Activated CD4-positive, alpha-beta memory T cell treated with anti-CD3 and anti-CD28 coated beads for 36 hours (primary cell): ENCODE measurements at regions of chr6 and their contacts with region 1.

Region 1: GRCh38 chr6:30814136-30815040 is 69.9 kb upstream of the DDR1 start:
- DNase-seq: peak; percentile 78
- H3K4me3 Mint-ChIP-seq: peak overlapping the region; percentile 22
- H3K27ac Mint-ChIP-seq: peak overlapping the region; percentile 91
- H3K4me1 Mint-ChIP-seq: peaks cover 94% of the 10 kb centered on the region
- H3K27me3 Mint-ChIP-seq: no peaks in the 10 kb centered on the region

Region 2: DNA sequence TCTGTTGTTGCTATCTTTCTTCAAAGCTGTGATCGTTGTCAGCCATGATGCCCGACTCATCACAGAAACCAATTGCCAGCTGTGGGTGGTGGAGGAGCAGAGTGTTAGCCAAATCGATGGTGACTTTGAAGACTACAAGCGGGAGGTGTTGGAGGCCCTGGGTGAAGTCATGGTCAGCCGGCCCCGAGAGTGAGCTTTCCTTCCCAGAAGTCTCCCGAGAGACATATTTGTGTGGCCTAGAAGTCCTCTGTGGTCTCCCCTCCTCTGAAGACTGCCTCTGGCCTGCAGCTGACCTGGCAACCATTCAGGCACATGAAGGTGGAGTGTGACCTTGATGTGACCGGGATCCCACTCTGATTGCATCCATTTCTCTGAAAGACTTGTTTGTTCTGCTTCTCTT is 223.9 kb before region 1 on chr6:
- CTCF ChIA-PET with region 1: no interaction called
- POLR2A ChIA-PET with region 1: no interaction called
- intact Hi-C with region 1: no loop called
- DNase-seq: no peak
- H3K4me3 Mint-ChIP-seq: no peak overlapping the region
- H3K27ac Mint-ChIP-seq: no peak overlapping the region
- H3K4me1 Mint-ChIP-seq: no peaks in the 10 kb centered on the region
- H3K27me3 Mint-ChIP-seq: no peaks in the 10 kb centered on the region

Region 3: GRCh38 chr6:30672445-30673253 is 141.7 kb before region 1 on chr6 and contains the start of gene DHX16:
- CTCF ChIA-PET with region 1: no interaction called
- POLR2A ChIA-PET with region 1: no interaction called
- intact Hi-C with region 1: no loop called
- DNase-seq: peak; percentile 93
- H3K4me3 Mint-ChIP-seq: peak within 1 kb of the TSS; percentile 91
- H3K27ac Mint-ChIP-seq: peak within 1 kb of the TSS; percentile 84
- H3K4me1 Mint-ChIP-seq: peaks cover 30% of the 10 kb centered on the region
- H3K27me3 Mint-ChIP-seq: no peaks in the 10 kb centered on the region
- total RNA-seq, gene DHX16: 33.1 to 35.3 TPM

Region 4: GRCh38 chr6:30761791-30762429 is 52.5 kb before region 1 on chr6:
- CTCF ChIA-PET with region 1: interaction called, 3 read pairs
- POLR2A ChIA-PET with region 1: interaction called, 4 read pairs
- intact Hi-C with region 1: loop called (anchors 1 kb)
- DNase-seq: no peak
- H3K4me3 Mint-ChIP-seq: no peak overlapping the region
- H3K27ac Mint-ChIP-seq: peak overlapping the region; percentile 50
- H3K4me1 Mint-ChIP-seq: peaks cover 48% of the 10 kb centered on the region
- H3K27me3 Mint-ChIP-seq: no peaks in the 10 kb centered on the region

Region 5: DNA sequence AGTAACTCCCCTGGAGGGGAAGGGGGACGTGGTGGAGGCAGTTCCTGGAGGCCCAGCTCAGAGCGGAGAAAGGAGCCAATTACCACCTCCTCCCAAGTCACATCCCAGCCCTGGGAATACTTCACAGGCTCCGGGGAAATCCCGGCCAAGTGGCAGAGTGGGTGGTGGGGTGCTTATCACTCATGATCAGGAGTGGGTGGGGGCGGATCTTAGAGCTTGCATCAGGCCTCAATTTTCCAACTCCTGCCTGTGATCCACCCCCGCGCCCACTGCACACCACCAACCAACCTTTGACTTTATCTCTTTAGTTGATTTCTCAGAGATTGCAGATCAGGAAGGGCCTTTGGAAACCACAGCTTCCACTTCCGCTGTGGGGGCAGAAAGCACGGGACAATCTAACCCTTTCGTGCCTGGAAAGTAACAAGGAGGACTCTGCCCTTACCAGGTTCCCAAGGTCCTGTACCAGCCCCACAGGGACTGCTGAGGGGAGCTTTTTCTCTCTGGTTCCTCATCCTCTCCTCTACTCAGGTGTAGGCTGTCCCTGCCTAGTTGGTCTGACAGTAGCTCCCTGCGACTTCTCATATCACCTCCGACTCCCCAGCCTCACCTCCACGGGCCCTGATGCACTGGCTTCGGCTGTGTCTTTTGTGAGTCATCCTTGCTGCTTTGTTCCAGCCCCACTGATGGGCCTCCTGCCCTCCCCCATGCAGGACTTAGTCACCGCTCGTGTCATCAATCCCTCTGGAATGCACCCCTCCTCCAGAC is 45.1 kb before region 1 on chr6:
- CTCF ChIA-PET with region 1: interaction called, 18 read pairs
- POLR2A ChIA-PET with region 1: interaction called, 35 read pairs
- intact Hi-C with region 1: loop called (anchors 1 kb)
- DNase-seq: peak; percentile 89
- H3K4me3 Mint-ChIP-seq: peak overlapping the region; percentile 52
- H3K27ac Mint-ChIP-seq: peak overlapping the region; percentile 93
- H3K4me1 Mint-ChIP-seq: peaks cover 65% of the 10 kb centered on the region
- H3K27me3 Mint-ChIP-seq: no peaks in the 10 kb centered on the region

Region 6: DNA sequence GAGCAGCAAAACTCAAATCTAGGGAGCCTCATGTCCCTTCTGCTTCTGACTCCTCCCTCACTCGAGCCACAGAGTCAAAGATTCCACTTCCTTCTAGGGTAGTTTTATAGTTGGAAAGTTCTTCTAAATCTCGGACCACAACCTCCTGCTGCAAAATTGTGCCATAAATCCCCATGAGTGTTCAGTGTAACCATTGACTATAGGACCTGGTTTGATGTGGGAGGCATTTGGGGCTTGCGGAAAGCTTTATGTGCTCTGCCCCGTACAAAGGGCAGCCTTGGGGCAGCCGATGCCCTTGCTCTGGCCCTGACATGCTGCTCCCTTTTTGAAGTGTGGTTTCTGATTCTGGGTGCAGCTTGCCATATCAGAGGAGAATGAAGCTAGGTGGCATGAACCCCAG is 26.4 kb before region 1 on chr6:
- CTCF ChIA-PET with region 1: interaction called, 23 read pairs
- POLR2A ChIA-PET with region 1: interaction called, 23 read pairs
- intact Hi-C with region 1: loop called (anchors 1 kb)
- DNase-seq: peak; percentile 58
- H3K4me3 Mint-ChIP-seq: peak overlapping the region; percentile 48
- H3K27ac Mint-ChIP-seq: peak overlapping the region; percentile 89
- H3K4me1 Mint-ChIP-seq: peaks cover 61% of the 10 kb centered on the region
- H3K27me3 Mint-ChIP-seq: no peaks in the 10 kb centered on the region

Region 7: DNA sequence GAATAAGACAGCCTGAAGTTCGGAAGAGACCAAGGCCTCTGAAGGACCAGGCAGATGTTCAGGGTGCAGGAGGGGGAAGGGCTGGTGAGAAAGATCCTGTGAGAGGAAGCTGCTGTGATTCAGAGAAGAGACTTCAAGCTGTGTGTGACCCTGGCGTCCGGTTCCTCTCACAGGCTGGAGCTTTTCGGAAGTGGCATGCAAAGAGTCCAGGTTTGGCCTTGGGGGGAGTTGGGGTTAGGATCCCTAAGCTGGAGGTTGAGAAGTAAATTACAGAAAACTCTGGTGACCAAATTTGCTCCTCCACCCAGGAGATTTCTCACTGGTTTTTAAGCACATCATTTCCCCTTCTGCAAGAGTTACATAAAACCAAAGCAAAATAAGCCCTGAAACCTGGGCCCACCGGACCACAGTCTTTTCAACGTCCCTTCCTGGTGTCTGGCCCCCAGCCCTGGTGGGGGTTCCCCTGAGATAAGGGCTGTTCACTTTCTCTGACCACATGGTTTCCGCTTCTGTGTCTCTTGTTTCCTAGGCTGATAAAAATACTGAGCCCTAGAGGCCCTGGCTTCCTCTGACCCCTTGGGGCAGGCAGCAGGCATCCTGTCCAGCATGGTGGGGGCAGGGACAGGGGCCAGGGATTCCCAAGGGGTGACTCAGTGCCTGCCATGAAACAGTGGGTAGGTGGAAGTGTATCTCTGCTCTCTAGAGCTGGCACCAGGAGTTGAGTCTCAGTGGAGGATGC is 745.7 kb after region 1 on chr6:
- CTCF ChIA-PET with region 1: no interaction called
- POLR2A ChIA-PET with region 1: no interaction called
- intact Hi-C with region 1: loop called (anchors 10 kb)
- DNase-seq: peak; percentile 81
- H3K4me3 Mint-ChIP-seq: peak overlapping the region; percentile 59
- H3K27ac Mint-ChIP-seq: peak overlapping the region; percentile 86
- H3K4me1 Mint-ChIP-seq: peaks cover 80% of the 10 kb centered on the region
- H3K27me3 Mint-ChIP-seq: no peaks in the 10 kb centered on the region